Naive thymus-derived CD8-positive, alpha-beta T cell (primary cell): ENCODE measurements at regions of chr3 and their contacts with region 1.

Region 1: GRCh38 chr3:130746246-130747039 is at the start of gene PIK3R4:
- DNase-seq: peak; percentile 77 to 98 (median 95)
- ATAC-seq: peak; percentile 81 to 84
- H3K4me3 Mint-ChIP-seq: peak within 1 kb of the TSS in 9 of 10 donors; percentile 86 to 95 (median 93)
- H3K27ac Mint-ChIP-seq: peak within 1 kb of the TSS; percentile 90 to 98 (median 96)
- H3K4me1 Mint-ChIP-seq: peaks cover 30 to 55% (median 52%) of the 10 kb centered on the region in 4 donors
- H3K27me3 Mint-ChIP-seq: peaks cover 0 to 4% (median 0%) of the 10 kb centered on the region in 5 donors
- polyA plus RNA-seq, gene PIK3R4: 12.0 to 35.6 (median 19.4) TPM

Region 2: GRCh38 chr3:130729154-130729553 is 17.3 kb before region 1 on chr3:
- POLR2A ChIA-PET with region 1: interaction called, 13 read pairs
- DNase-seq: no peak
- ATAC-seq: no peak
- H3K4me3 Mint-ChIP-seq: no peak overlapping the region
- H3K27ac Mint-ChIP-seq: peak overlapping the region in 3 of 10 donors; percentile 3 to 64 (median 33)
- H3K4me1 Mint-ChIP-seq: peaks cover 0 to 7% (median 3%) of the 10 kb centered on the region in 4 donors
- H3K27me3 Mint-ChIP-seq: no peaks in the 10 kb centered on the region

Region 3: DNA sequence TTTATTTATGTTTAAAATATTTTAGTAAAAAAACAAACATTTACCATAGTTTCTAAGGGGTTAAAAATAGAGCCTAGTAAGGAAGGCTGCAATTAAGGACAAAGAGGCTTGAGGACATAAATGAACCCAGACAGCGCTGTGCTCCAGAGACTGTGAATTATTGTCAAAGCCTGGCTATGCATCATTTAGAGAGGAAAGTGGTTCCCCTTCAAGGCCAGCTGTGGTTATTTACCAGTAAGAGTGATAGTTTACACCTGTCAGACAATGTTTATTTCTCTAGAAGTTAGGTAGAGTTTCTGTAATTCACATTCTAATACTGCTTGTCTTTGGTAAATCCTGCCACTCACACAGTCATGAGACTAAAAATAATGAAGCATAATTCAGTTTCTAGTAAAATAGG is 32.6 kb after region 1 on chr3:
- POLR2A ChIA-PET with region 1: no interaction called
- DNase-seq: no peak
- ATAC-seq: no peak
- H3K4me3 Mint-ChIP-seq: no peak overlapping the region
- H3K27ac Mint-ChIP-seq: no peak overlapping the region
- H3K4me1 Mint-ChIP-seq: peaks cover 0 to 2% (median 0%) of the 10 kb centered on the region in 4 donors
- H3K27me3 Mint-ChIP-seq: peaks cover 0 to 9% (median 1%) of the 10 kb centered on the region in 5 donors

Region 4: GRCh38 chr3:130800829-130801228 is 54.4 kb after region 1 on chr3:
- POLR2A ChIA-PET with region 1: no interaction called
- DNase-seq: no peak
- ATAC-seq: no peak
- H3K4me3 Mint-ChIP-seq: no peak overlapping the region
- H3K27ac Mint-ChIP-seq: no peak overlapping the region
- H3K4me1 Mint-ChIP-seq: no peaks in the 10 kb centered on the region
- H3K27me3 Mint-ChIP-seq: peaks cover 7 to 22% (median 11%) of the 10 kb centered on the region in 5 donors

Region 5: GRCh38 chr3:130892759-130893375 is 146.4 kb after region 1 on chr3:
- POLR2A ChIA-PET with region 1: interaction called, 13 read pairs
- DNase-seq: peak; percentile 17 to 86 (median 66)
- ATAC-seq: peak; percentile 56 to 68
- H3K4me3 Mint-ChIP-seq: peak overlapping the region; percentile 88 to 98 (median 96)
- H3K27ac Mint-ChIP-seq: peak overlapping the region; percentile 96 to 100 (median 99)
- H3K4me1 Mint-ChIP-seq: peaks cover 15 to 41% (median 37%) of the 10 kb centered on the region in 4 donors
- H3K27me3 Mint-ChIP-seq: no peaks in the 10 kb centered on the region